Activated CD8-positive, alpha-beta T cell treated with anti-CD3 and anti-CD28 coated beads for 36 hours (primary cell): ENCODE measurements at regions of chr2 and their contacts with region 1.

Region 1: GRCh38 chr2:203814661-203815540 is 52.7 kb upstream of the CTLA4 start:
- DNase-seq: peak; percentile 73
- ATAC-seq: peak; percentile 83
- H3K4me3 Mint-ChIP-seq: peak overlapping the region; percentile 34
- H3K27ac Mint-ChIP-seq: peak overlapping the region; percentile 51
- H3K4me1 Mint-ChIP-seq: peaks cover 59% of the 10 kb centered on the region
- H3K27me3 Mint-ChIP-seq: peaks cover 2% of the 10 kb centered on the region
- CTCF ChIP-seq: peak; percentile 72

Region 2: DNA sequence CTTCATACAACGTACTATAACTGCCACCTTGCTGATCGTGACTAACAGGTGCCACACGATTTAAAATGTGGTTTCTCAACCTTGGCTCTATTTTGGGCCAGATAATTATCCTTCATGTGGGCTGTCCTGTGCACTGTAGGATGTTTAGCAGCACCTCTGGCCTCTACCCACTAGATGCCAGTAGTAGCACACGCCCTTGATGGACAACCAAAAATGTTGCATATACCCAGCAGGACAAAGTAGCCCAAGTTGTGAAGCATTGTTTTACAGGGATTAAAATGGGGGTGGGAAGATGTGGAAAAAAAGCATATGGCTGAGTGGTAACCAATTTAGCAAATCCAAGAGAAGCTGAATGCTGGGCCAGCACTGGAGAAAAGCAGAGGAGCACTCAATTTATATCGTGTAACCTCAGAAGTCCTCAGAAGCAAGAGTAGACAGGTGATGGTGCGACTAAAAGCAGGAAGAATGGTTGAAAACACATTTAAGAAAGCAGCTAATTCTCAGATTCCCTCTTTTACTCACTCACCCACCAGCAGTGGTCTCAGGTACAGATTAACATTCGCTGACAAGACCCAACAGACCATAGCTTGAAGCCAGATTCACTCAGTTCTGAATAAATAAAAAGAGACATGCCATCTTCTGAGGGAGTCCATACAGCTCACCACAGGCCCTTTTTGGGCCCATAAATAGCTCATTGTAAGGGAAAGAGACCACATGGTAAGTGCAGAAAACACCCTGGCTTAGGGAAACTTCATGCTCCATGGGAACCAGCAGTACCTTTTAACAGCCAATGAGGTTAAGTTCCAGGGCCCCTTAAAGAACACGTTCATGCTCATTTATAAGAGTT is 330.4 kb before region 1 on chr2:
- CTCF ChIA-PET with region 1: interaction called, 95 read pairs
- POLR2A ChIA-PET with region 1: interaction called, 3 read pairs
- intact Hi-C with region 1: loop called (anchors 2 kb)
- DNase-seq: peak; percentile 67
- ATAC-seq: peak; percentile 96
- H3K4me3 Mint-ChIP-seq: no peak overlapping the region
- H3K27ac Mint-ChIP-seq: peak overlapping the region; percentile 13
- H3K4me1 Mint-ChIP-seq: peaks cover 7% of the 10 kb centered on the region
- H3K27me3 Mint-ChIP-seq: no peaks in the 10 kb centered on the region
- CTCF ChIP-seq: peak; percentile 79

Region 3: GRCh38 chr2:203659331-203660049 is 155.4 kb before region 1 on chr2:
- CTCF ChIA-PET with region 1: no interaction called
- POLR2A ChIA-PET with region 1: no interaction called
- intact Hi-C with region 1: no loop called
- DNase-seq: no peak
- ATAC-seq: no peak
- H3K4me3 Mint-ChIP-seq: no peak overlapping the region
- H3K27ac Mint-ChIP-seq: no peak overlapping the region
- H3K4me1 Mint-ChIP-seq: peaks cover 28% of the 10 kb centered on the region
- H3K27me3 Mint-ChIP-seq: no peaks in the 10 kb centered on the region
- CTCF ChIP-seq: no peak

Region 4: DNA sequence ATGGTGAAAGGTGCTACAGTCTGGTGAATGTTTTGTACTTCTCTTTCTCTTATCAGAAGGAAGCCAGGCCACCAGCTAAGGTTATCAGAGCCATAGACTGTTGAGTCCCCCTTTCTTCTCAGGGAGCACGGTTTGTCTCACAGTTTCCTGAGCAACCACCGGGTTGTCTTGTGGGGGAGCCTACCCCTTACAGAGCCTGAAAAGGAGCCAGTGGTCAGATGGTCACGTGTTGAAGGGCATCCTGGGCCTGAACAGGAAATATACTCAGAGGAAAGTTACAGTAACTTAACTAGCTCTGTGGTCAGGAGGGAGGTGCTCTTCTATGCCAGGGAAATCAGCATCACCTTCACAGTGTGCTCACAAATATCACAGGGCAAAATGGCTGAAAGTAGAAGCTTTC is 96.8 kb before region 1 on chr2:
- CTCF ChIA-PET with region 1: interaction called, 55 read pairs
- POLR2A ChIA-PET with region 1: interaction called, 22 read pairs
- intact Hi-C with region 1: no loop called
- DNase-seq: peak; percentile 90
- ATAC-seq: peak; percentile 80
- H3K4me3 Mint-ChIP-seq: peak overlapping the region; percentile 43
- H3K27ac Mint-ChIP-seq: peak overlapping the region; percentile 88
- H3K4me1 Mint-ChIP-seq: peaks cover 96% of the 10 kb centered on the region
- H3K27me3 Mint-ChIP-seq: no peaks in the 10 kb centered on the region
- CTCF ChIP-seq: no peak

Region 5: DNA sequence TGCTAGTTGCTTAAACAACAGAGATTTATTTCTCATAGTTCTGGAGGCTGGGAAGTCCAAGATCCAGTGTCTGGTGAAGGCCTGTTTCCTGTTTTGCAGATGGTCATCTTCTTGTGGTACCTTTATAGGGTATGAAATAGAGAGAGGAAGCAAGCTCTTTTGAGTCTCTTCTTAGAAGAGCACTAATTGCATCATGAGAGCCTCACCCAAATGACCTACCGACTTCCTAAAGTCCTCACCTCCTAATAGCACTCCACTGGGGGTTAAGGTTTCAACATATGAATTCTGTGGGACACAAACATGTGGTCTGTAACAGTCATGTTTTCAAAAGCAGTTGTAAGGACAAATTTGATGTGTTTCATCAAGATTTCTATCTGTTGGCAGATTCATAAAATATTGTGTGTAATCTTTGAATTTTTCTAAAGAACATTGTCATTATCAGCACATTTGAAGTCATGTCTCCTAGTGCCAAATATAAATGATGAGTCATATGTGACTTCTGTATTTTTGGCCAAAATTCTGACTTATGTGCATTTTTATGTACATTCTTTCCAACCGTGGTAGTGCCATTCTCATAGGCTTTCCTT is 63.1 kb before region 1 on chr2:
- CTCF ChIA-PET with region 1: interaction called, 7 read pairs
- POLR2A ChIA-PET with region 1: interaction called, 11 read pairs
- intact Hi-C with region 1: no loop called
- DNase-seq: no peak
- ATAC-seq: no peak
- H3K4me3 Mint-ChIP-seq: no peak overlapping the region
- H3K27ac Mint-ChIP-seq: peak overlapping the region; percentile 66
- H3K4me1 Mint-ChIP-seq: peaks cover 49% of the 10 kb centered on the region
- H3K27me3 Mint-ChIP-seq: no peaks in the 10 kb centered on the region
- CTCF ChIP-seq: no peak

Region 6: DNA sequence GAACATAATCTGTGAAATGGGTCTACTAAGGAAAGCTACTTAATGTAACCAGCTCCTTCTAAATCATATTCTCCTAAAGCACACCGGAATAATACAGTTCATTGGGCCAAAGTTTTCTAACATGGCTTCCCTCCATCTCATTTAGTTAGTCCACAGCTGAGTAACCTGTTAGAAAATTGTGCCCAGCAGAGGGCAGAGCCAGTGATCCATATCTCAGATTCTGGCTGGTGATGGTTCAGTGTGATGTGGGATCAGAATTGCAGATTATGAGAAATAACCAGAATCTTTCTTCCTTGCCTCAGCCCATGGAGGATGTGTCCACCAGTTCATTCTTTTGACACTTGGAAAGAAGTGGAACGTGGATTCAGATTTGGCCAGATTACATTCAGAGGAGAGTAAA is 43.3 kb after region 1 on chr2:
- CTCF ChIA-PET with region 1: interaction called, 24 read pairs
- POLR2A ChIA-PET with region 1: interaction called, 4 read pairs
- intact Hi-C with region 1: no loop called
- DNase-seq: peak; percentile 55
- ATAC-seq: no peak
- H3K4me3 Mint-ChIP-seq: no peak overlapping the region
- H3K27ac Mint-ChIP-seq: no peak overlapping the region
- H3K4me1 Mint-ChIP-seq: peaks cover 67% of the 10 kb centered on the region
- H3K27me3 Mint-ChIP-seq: no peaks in the 10 kb centered on the region
- CTCF ChIP-seq: no peak

Region 7: GRCh38 chr2:203934041-203934492 is 119.2 kb after region 1 on chr2:
- CTCF ChIA-PET with region 1: interaction called, 11 read pairs
- POLR2A ChIA-PET with region 1: no interaction called
- intact Hi-C with region 1: no loop called
- DNase-seq: peak; percentile 81
- ATAC-seq: peak; percentile 50
- H3K4me3 Mint-ChIP-seq: peak overlapping the region; percentile 60
- H3K27ac Mint-ChIP-seq: peak overlapping the region; percentile 95
- H3K4me1 Mint-ChIP-seq: peaks cover 58% of the 10 kb centered on the region
- H3K27me3 Mint-ChIP-seq: no peaks in the 10 kb centered on the region
- CTCF ChIP-seq: no peak

Region 8: GRCh38 chr2:203949228-203949627 is 134.3 kb after region 1 on chr2:
- CTCF ChIA-PET with region 1: no interaction called
- POLR2A ChIA-PET with region 1: no interaction called
- intact Hi-C with region 1: no loop called
- DNase-seq: no peak
- ATAC-seq: peak; percentile 68
- H3K4me3 Mint-ChIP-seq: peak overlapping the region; percentile 36
- H3K27ac Mint-ChIP-seq: peak overlapping the region; percentile 83
- H3K4me1 Mint-ChIP-seq: peaks cover 85% of the 10 kb centered on the region
- H3K27me3 Mint-ChIP-seq: no peaks in the 10 kb centered on the region
- CTCF ChIP-seq: no peak